Activated CD4-positive, alpha-beta memory T cell treated with anti-CD3 and anti-CD28 coated beads for 36 hours (primary cell): ENCODE measurements at regions of chr5 and their contacts with region 1.

Region 1: GRCh38 chr5:131096774-131097710 is 68.0 kb downstream of the HINT1 start:
- DNase-seq: no peak
- H3K4me3 Mint-ChIP-seq: no peak overlapping the region
- H3K27ac Mint-ChIP-seq: no peak overlapping the region
- H3K4me1 Mint-ChIP-seq: peaks cover 10% of the 10 kb centered on the region
- H3K27me3 Mint-ChIP-seq: peaks cover 4% of the 10 kb centered on the region

Region 2: DNA sequence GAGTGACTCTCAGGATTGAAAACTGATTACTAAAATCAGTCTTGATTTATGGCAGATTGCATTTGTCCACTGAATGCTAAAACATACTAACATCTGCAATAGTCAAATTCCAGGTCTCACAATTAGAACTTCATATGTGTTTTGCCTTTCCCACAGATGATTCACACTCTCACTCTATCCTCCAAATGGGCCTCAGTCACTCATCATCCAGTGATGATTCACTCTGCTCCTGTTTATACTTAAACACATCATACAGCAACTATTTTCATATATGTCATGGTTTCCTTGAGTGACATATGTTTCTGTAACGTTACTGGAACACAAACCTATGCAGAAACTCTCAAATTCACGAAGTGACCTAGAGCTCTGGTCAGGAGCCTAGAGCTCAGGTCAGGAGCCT is 444.9 kb before region 1 on chr5:
- CTCF ChIA-PET with region 1: no interaction called
- POLR2A ChIA-PET with region 1: no interaction called
- intact Hi-C with region 1: loop called (anchors 1 kb)
- DNase-seq: no peak
- H3K4me3 Mint-ChIP-seq: no peak overlapping the region
- H3K27ac Mint-ChIP-seq: no peak overlapping the region
- H3K4me1 Mint-ChIP-seq: peaks cover 5% of the 10 kb centered on the region
- H3K27me3 Mint-ChIP-seq: peaks cover 7% of the 10 kb centered on the region